Activated T-helper 1 cell treated with anti-CD3 and anti-CD28 coated beads, Interleukin-12 subunit alpha, Interleukin-12 subunit beta, Interleukin-2, Interleukin-4 antibody, amounts not matched to agents 30 ng/mL and 10 ng/mL and 1 ng/mL, durations not matched to agents 14 hours and 24 hours and 36 hours (primary cell): ENCODE measurements at regions of chr6 and their contacts with region 1.

Region 1: DNA sequence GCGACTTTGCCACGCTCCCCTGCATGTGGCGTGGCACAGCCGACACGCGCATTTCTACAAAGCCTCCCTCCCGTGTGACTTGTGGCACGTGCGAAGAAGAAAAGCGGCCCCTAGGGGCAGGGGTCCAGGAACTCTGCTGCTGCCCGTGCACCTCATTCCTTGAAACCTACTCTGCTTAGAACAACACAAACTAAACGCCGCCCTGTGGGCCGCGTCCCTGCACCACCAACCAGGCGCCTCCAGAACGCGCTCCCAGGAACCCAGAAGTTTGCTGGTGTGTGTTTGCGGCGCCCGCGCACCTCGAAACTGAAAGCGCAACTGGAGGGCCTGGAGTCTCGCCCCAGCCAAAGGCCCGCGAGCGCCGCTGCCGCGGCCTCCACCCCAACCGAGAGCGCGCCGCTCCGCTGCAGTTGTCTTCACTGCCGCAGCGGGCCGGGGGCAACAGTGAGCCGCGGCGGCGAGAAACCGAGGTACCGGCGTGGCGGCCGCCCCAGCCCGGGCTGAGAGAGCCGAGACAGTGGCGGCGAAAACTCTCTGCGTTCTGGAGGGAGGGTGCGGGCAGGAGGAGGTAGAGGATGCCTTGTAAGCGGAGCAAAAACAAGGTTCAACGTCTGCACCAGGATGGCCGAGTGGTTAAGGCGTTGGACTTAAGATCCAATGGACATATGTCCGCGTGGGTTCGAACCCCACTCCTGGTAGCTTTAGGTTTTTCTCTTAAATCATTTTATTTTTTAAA is 65.8 kb downstream of the STX11 start:
- DNase-seq: peak; percentile 88
- H3K4me3 Mint-ChIP-seq: peak overlapping the region; percentile 93
- H3K27ac Mint-ChIP-seq: peak overlapping the region; percentile 95
- H3K4me1 Mint-ChIP-seq: peaks cover 37% of the 10 kb centered on the region
- H3K27me3 Mint-ChIP-seq: peaks cover 6% of the 10 kb centered on the region

Region 2: DNA sequence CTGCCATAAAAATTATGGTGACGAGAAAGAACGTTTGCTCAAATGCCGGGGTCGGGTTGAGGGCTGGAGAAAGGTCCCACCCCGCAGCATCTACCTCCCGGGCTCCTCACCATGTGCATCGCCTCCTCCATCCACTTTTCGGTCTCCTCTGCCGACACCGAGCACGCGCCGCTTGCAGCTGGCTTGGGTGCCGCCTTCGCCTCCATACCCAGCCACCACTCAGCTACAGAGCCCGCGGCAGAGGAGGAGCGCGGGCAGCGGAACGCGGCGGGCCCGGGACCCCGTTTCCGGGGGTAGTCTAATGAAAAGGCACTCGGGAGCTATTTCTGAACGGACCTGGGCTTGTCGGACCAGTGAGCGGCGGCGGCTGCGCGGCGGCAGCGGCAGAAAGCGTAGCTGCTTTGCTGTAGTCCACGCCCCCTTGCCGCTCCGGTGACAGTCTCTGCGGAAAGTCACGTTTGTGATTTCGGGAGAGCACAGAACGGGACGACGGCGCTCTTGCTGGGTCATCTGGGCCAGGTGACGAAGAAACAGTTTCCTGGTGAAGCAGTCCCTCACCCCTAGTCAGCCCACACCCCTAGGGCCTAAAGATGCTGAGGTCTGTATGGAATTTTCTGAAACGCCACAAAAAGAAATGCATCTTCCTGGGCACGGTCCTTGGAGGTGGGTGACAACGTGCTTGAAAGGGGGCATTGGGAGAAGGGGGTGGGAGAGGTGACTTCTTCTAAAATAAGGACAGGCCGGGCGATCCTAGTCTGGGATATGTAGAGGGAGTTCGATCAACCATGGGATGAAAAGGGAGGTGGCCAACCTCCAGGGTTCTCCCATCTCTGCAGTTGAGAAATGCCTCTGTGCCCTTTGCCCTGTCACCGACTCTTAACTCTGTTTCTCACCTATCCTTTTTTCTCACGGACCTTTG is 765.4 kb before region 1 on chr6 and contains the starts of genes ADAT2 and PEX3:
- intact Hi-C with region 1: loop called (anchors 10 kb)
- DNase-seq: peak; percentile 92
- H3K4me3 Mint-ChIP-seq: peak within 1 kb of the TSS; percentile 98
- H3K27ac Mint-ChIP-seq: peak within 1 kb of the TSS; percentile 99
- H3K4me1 Mint-ChIP-seq: peaks cover 50% of the 10 kb centered on the region
- H3K27me3 Mint-ChIP-seq: no peaks in the 10 kb centered on the region
- total RNA-seq, gene ADAT2: 39.0 and 43.6 TPM in 2 replicates
- total RNA-seq, gene PEX3: 23.6 and 25.0 TPM in 2 replicates

Region 3: GRCh38 chr6:143884216-143884900 is 331.7 kb before region 1 on chr6:
- intact Hi-C with region 1: no loop called
- DNase-seq: no peak
- H3K4me3 Mint-ChIP-seq: no peak overlapping the region
- H3K27ac Mint-ChIP-seq: no peak overlapping the region
- H3K4me1 Mint-ChIP-seq: no peaks in the 10 kb centered on the region
- H3K27me3 Mint-ChIP-seq: peaks cover 8% of the 10 kb centered on the region

Region 4: DNA sequence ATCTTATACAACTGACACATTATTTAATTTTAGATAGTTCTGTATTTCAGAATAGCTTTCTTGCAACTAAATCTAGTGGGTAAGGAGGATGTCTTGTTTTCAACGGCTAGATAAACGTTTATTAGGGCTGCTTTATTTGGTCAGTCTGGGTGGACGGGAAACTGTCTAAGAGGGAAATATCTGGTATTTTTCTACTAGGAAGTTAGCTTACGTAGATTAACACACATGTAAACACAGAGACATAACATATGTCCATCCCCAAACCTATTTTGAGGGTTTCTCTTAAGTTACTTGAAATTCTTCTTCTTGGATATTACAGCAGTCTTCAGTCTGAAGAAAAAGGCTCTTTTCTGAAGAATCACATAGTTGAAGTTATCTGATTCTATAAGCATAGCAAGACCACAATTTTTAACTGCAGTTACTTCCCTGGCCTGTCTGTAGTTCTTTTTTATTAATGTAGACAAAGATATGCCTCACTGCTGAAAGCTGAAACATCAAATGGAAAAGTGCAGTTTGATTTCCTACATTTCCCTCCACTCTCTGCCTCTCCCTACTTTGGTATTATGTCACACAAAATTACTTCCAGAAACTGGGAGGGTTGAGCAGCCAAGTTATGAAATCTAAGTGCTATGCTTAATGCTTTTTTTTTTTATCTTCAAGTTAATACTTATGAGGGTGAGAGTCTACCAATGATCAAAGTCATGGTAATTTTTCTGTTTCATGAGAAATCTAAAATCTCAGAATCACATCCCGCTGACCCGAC is 245.5 kb before region 1 on chr6:
- intact Hi-C with region 1: no loop called
- DNase-seq: no peak
- H3K4me3 Mint-ChIP-seq: no peak overlapping the region
- H3K27ac Mint-ChIP-seq: no peak overlapping the region
- H3K4me1 Mint-ChIP-seq: no peaks in the 10 kb centered on the region
- H3K27me3 Mint-ChIP-seq: no peaks in the 10 kb centered on the region

Region 5: GRCh38 chr6:144063744-144064401 is 152.2 kb before region 1 on chr6:
- intact Hi-C with region 1: loop called (anchors 1 kb)
- DNase-seq: peak; percentile 89
- H3K4me3 Mint-ChIP-seq: peak overlapping the region; percentile 83
- H3K27ac Mint-ChIP-seq: peak overlapping the region; percentile 82
- H3K4me1 Mint-ChIP-seq: peaks cover 44% of the 10 kb centered on the region
- H3K27me3 Mint-ChIP-seq: no peaks in the 10 kb centered on the region

Region 6: DNA sequence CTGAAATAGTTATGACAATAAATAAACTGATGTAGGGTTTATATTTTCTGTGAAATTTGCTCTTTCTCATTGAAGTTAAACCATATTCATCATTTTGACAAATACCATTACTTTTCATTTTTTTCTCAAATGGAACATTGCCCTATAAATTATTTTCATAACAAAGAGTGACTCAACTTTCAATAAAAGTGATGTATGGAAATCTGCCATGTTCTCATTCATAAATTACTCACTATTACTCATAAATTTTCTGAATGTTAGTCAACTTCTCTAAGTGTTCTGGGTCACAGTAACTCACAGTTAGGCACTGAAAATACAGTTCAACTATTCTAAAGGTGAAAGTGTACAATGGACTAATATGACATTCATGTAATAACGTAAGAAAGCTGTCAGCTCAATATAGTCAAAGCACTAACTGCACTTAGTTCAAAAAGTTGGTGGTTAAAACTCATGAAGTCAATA is 84.8 kb before region 1 on chr6:
- intact Hi-C with region 1: loop called (anchors 1 kb)
- DNase-seq: no peak
- H3K4me3 Mint-ChIP-seq: no peak overlapping the region
- H3K27ac Mint-ChIP-seq: peak overlapping the region; percentile 93
- H3K4me1 Mint-ChIP-seq: peaks cover 16% of the 10 kb centered on the region
- H3K27me3 Mint-ChIP-seq: no peaks in the 10 kb centered on the region

Region 7: GRCh38 chr6:144248476-144249301 is 32.6 kb after region 1 on chr6:
- intact Hi-C with region 1: loop called (anchors 2 kb)
- DNase-seq: no peak
- H3K4me3 Mint-ChIP-seq: no peak overlapping the region
- H3K27ac Mint-ChIP-seq: peak overlapping the region; percentile 57
- H3K4me1 Mint-ChIP-seq: peaks cover 26% of the 10 kb centered on the region
- H3K27me3 Mint-ChIP-seq: peaks cover 7% of the 10 kb centered on the region

Region 8: DNA sequence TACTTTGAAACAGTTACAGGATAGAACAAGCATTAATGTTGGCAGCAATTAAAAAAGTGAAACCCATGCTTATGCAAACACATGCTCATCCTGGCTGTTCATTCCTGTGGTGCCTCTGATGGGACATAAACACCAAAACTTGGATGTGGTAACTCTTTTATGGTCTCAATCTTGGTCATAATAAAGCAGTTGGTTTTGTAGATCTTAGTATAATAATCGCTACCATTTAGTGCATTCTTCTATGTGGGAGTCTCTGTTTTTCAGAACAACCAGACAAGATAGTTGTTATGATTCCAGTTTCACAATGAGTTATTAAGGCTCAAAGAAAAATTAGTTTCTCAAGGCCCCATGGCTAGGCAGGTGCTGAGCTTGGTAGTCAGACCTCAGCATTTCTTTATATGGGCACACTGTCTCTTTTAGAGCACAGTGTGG is 253.1 kb after region 1 on chr6:
- intact Hi-C with region 1: loop called (anchors 1 kb)
- DNase-seq: no peak
- H3K4me3 Mint-ChIP-seq: peak overlapping the region; percentile 54
- H3K27ac Mint-ChIP-seq: peak overlapping the region; percentile 86
- H3K4me1 Mint-ChIP-seq: peaks cover 27% of the 10 kb centered on the region
- H3K27me3 Mint-ChIP-seq: no peaks in the 10 kb centered on the region